ENCODE measurements at regions of chr17 and their contacts with region 1.

Region 1: DNA sequence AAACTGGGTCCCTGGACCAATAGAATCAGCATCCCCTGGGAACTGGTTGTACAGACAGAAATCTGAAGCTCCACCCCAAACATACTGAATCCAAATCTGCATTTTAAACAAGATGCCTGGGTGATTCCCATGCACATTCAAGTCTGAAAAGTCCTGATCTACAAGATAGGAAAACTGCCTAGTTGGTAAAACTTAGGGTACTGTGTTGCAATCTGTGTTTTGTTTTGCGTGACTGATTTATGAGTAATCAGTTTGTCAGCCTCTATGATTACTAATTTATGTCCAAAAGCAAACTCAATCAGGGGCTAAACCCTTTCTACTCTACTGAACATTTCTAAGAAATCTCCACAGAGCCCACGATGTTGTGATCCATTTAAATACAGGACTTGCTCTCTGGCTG is 103.8 kb downstream of the YPEL2 start:
- DNase-seq: no peak
- ATAC-seq: peak in 1 of 2 donors; percentile 55
- H3K4me3 ChIP-seq: no peak overlapping the region
- H3K27ac ChIP-seq: peak overlapping the region in 1 of 4 donors; percentile 15
- H3K4me1 ChIP-seq: peaks cover 17 to 34% of the 10 kb centered on the region in 2 donors
- H3K27me3 ChIP-seq: no peaks in the 10 kb centered on the region
- CTCF ChIP-seq: no peak
- POLR2A ChIP-seq: no peak

Region 2: DNA sequence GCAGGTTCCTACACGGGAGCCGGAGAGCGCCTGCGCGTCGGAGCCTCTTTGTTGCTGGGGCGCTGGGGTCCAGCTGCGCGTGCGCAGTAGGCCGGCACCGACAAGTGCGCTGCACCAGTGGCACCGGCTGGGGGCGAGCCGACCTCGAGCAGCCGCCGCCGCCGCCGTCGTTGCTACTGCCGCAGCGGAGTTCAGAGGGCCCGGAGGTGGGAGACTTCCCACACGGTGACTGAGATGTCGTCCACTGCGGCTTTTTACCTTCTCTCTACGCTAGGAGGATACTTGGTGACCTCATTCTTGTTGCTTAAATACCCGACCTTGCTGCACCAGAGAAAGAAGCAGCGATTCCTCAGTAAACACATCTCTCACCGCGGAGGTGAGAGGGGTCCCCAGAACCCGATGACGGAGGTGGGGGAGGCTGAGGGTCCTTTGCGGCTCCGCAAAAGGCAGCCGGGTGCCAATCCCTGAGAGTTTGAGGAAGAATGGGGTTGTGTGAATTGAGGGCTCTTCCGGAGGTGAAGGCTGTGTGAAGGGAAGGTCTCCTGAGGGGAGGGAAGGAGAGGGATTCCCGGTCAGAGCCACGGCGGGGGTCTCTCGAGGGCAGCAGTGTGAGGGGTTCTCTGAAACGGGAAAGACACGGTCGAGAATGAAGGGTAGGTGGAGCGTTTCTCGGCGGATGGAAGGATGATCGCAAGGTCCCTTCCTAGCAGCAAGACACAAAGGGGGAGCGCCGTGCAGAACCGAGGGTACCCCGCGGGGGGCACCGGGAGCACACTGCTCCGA is 214.7 kb before region 1 on chr17 and contains the start of gene GDPD1:
- in situ Hi-C with region 1: no loop called
- intact Hi-C with region 1: loop called (anchors 5 kb)
- DNase-seq: peak; percentile 90 to 93
- ATAC-seq: peak; percentile 93 to 97
- H3K4me3 ChIP-seq: peak within 1 kb of the TSS; percentile 76 to 100 (median 96)
- H3K27ac ChIP-seq: peak within 1 kb of the TSS; percentile 75 to 90 (median 88)
- H3K4me1 ChIP-seq: peaks cover 4 to 5% of the 10 kb centered on the region in 2 donors
- H3K27me3 ChIP-seq: no peaks in the 10 kb centered on the region
- CTCF ChIP-seq: peak; percentile 63 to 82 (median 74)
- POLR2A ChIP-seq: no peak
- total RNA-seq, gene GDPD1: 0.29 to 0.95 (median 0.29) TPM in 3 of 4 donors, not detected in the other

Region 3: GRCh38 chr17:60284709-60285108 is 849.5 kb after region 1 on chr17:
- in situ Hi-C with region 1: no loop called
- intact Hi-C with region 1: no loop called
- DNase-seq: no peak
- ATAC-seq: no peak
- H3K4me3 ChIP-seq: no peak overlapping the region
- H3K27ac ChIP-seq: no peak overlapping the region
- H3K4me1 ChIP-seq: no peaks in the 10 kb centered on the region
- H3K27me3 ChIP-seq: no peaks in the 10 kb centered on the region
- CTCF ChIP-seq: no peak
- POLR2A ChIP-seq: no peak

Measured in gastrocnemius medialis (tissue), 4 donors.